Transverse colon (tissue), 4 donors: ENCODE measurements at regions of chr4 and their contacts with region 1.

Region 1: GRCh38 chr4:129064717-129065116 is 28.6 kb downstream of the SCLT1 start:
- DNase-seq: no peak
- H3K4me3 ChIP-seq: no peak overlapping the region
- H3K27ac ChIP-seq: no peak overlapping the region
- H3K4me1 ChIP-seq: no peaks in the 10 kb centered on the region
- H3K27me3 ChIP-seq: no peaks in the 10 kb centered on the region
- CTCF ChIP-seq: no peak
- EP300 ChIP-seq: no peak
- POLR2A ChIP-seq: no peak

Region 2: GRCh38 chr4:129014566-129015509 is 49.9 kb before region 1 on chr4:
- in situ Hi-C with region 1: no loop called
- intact Hi-C with region 1: loop called (anchors 10 kb)
- DNase-seq: no peak
- H3K4me3 ChIP-seq: no peak overlapping the region
- H3K27ac ChIP-seq: no peak overlapping the region
- H3K4me1 ChIP-seq: no peaks in the 10 kb centered on the region
- H3K27me3 ChIP-seq: no peaks in the 10 kb centered on the region
- CTCF ChIP-seq: no peak
- EP300 ChIP-seq: no peak
- POLR2A ChIP-seq: no peak